ENCODE measurements at regions of chr5 and their contacts with region 1.

Region 1: DNA sequence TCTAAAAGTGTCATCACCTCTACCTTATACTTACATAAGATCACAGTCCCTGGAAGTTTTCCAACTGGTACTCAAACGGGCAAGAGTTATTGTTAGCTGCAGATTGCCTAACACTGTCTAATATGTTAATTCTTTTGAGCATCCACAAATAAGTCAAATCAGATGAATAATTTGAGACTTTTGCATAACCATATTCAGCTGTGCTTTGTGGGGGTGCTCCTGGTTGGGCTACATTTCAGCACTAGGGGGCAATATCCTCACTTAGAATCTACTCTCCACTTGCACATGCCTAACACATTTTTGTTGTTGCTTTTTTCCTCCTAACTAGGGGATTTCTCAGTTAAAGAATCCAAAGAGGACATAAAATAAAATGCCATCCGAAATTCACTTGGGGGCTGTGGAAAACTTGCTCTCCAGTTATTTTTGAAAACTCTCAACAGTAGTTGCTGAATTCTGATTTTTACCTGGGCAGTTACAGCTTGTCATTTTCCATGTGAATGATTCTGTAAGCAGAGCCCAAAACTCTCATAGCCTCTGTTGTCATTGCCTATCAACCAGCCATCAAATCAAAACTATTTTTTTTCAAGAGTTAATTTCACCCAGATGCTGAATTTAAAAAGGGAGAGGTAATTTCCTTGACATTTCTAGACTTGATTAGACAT is 71.5 kb downstream of the TRIM36 start:
- DNase-seq: no peak
- ATAC-seq: peak; percentile 49

Region 2: DNA sequence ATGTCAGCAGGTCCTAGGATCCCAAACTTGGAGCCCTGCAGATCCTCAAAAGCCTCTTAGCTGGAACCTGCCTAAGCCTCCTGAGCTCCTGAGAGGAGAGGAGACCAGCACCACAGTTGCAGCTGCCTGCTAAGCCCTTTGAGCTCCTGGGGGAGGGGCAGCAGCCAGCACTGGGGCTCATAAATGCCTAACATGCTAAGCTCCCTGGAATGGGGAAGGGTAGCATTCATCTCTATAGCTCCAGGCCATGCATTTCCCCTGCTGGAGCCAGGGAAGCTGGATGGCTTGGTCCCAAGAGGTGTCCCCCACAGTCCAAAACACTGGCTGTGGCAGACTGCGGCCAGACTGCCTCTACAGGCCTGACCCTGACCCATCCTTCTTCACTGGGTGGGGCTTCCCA is 553.6 kb before region 1 on chr5:
- intact Hi-C with region 1: no loop called
- DNase-seq: peak; percentile 17
- ATAC-seq: no peak

Region 3: GRCh38 chr5:115243412-115243811 is 145.2 kb after region 1 on chr5:
- intact Hi-C with region 1: loop called (anchors 5 kb)
- DNase-seq: no peak
- ATAC-seq: no peak